ENCODE measurements at regions of chr4 and their contacts with region 1.

Region 1: GRCh38 chr4:183471946-183472708 is 27.7 kb downstream of the CDKN2AIP start:
- DNase-seq: peak; percentile 66
- ATAC-seq: peak; percentile 87
- H3K4me3 ChIP-seq: no peak overlapping the region
- H3K27ac ChIP-seq: no peak overlapping the region
- H3K4me1 ChIP-seq: peaks cover 2% of the 10 kb centered on the region
- H3K27me3 ChIP-seq: no peaks in the 10 kb centered on the region
- CTCF ChIP-seq: peak; percentile 85
- POLR2A ChIP-seq: no peak
- RAD21 ChIP-seq: peak; percentile 84

Region 2: DNA sequence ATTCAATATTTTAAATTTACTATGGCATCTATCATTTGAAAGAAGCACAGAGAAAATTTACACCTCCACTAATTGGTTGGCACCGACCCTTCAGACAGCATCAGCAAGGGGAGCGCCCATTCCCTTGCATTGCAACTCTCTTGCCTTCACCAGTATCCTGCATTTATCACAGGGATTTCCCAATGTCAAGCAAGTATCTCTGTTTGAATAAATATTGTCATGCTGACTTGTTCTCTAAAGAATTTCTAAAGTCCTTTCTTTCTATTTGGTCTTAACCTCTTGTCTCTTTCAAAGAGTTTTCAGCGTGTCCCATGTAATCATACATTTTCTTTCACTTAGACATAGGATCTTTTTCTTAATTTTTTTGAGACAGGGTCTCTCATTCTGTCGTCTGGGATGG is 565.3 kb before region 1 on chr4:
- CTCF ChIA-PET with region 1: no interaction called
- POLR2A ChIA-PET with region 1: no interaction called
- dilution Hi-C with region 1: no loop called
- in situ Hi-C with region 1: no loop called
- intact Hi-C with region 1: no loop called
- DNase-seq: peak; percentile 72
- ATAC-seq: peak; percentile 84
- H3K4me3 ChIP-seq: no peak overlapping the region
- H3K27ac ChIP-seq: peak overlapping the region; percentile 46; the same call in 1 of the 2 replicates
- H3K4me1 ChIP-seq: peaks cover 10% of the 10 kb centered on the region
- H3K27me3 ChIP-seq: no peaks in the 10 kb centered on the region
- CTCF ChIP-seq: no peak
- POLR2A ChIP-seq: no peak
- RAD21 ChIP-seq: no peak

Region 3: DNA sequence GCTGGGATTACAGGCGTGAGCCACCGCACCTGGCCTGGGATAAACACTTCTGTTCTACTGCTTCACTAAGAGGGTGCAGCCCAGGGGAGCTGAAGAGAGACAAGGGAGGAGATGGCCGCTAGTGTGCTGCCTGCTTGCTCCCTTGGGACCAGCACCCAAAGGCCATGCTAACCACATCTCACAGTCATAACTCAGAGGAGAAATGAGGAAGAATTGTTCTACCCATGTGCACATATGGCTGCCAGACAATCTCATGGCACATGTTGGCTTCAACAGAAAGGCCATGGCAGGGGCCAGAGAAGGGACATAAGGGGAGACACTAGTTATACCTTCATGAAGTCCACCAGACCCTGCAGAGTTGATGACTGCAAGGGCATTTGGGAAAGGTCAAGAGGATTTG is 174.5 kb before region 1 on chr4:
- CTCF ChIA-PET with region 1: no interaction called
- POLR2A ChIA-PET with region 1: no interaction called
- dilution Hi-C with region 1: no loop called
- in situ Hi-C with region 1: no loop called
- intact Hi-C with region 1: no loop called
- DNase-seq: no peak
- ATAC-seq: no peak
- H3K4me3 ChIP-seq: no peak overlapping the region
- H3K27ac ChIP-seq: no peak overlapping the region
- H3K4me1 ChIP-seq: peaks cover 4% of the 10 kb centered on the region; the same call in 1 of the 2 replicates
- H3K27me3 ChIP-seq: no peaks in the 10 kb centered on the region
- CTCF ChIP-seq: no peak
- POLR2A ChIP-seq: no peak
- RAD21 ChIP-seq: no peak

Region 4: DNA sequence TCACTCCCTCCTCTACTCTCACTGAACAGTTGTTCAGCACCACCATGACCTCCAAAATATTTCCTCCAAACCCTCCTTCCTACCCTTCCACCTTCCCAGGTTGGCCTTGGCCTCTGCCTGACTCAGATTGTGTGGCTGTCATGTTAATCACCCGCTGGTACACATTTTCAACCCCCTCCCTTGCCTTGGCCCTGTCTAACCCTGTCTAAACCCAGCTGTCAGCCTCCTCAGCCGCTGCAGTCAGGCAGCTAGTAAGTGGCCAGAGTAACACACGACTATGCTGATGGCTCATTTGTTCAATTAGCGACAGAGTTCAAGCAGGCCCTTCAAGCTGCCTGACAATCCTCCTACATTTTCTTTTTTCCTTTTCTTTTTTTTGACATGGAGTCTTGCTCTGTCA is 50.7 kb after region 1 on chr4:
- CTCF ChIA-PET with region 1: no interaction called
- POLR2A ChIA-PET with region 1: no interaction called
- dilution Hi-C with region 1: no loop called
- in situ Hi-C with region 1: no loop called
- intact Hi-C with region 1: no loop called
- DNase-seq: no peak
- ATAC-seq: no peak; the same call in 1 of the 2 replicates
- H3K4me3 ChIP-seq: no peak overlapping the region
- H3K27ac ChIP-seq: no peak overlapping the region
- H3K4me1 ChIP-seq: no peaks in the 10 kb centered on the region
- H3K27me3 ChIP-seq: peaks cover under 1% of the 10 kb centered on the region; the same call in 1 of the 2 replicates
- CTCF ChIP-seq: no peak
- POLR2A ChIP-seq: no peak
- RAD21 ChIP-seq: no peak

Region 5: GRCh38 chr4:183659029-183659871 is 187.1 kb after region 1 on chr4 and contains the starts of genes RWDD4 and TRAPPC11:
- CTCF ChIA-PET with region 1: no interaction called
- POLR2A ChIA-PET with region 1: no interaction called
- dilution Hi-C with region 1: no loop called
- in situ Hi-C with region 1: loop called (anchors 5 kb)
- intact Hi-C with region 1: loop called (anchors 1 kb)
- DNase-seq: peak; percentile 99
- ATAC-seq: peak; percentile 99
- H3K4me3 ChIP-seq: peak within 1 kb of the TSS; percentile 98
- H3K27ac ChIP-seq: peak within 1 kb of the TSS; percentile 79
- H3K4me1 ChIP-seq: no peaks in the 10 kb centered on the region; the same call in 1 of the 2 replicates
- H3K27me3 ChIP-seq: no peaks in the 10 kb centered on the region
- CTCF ChIP-seq: 0 out of 2 replicates have a peak, but pooled peaks have one; percentile 21
- POLR2A ChIP-seq: no peak
- RAD21 ChIP-seq: no peak
- total RNA-seq, gene RWDD4: 8.8 and 22.2 TPM in 2 replicates
- total RNA-seq, gene TRAPPC11: 38.9 and 56.8 TPM in 2 replicates